SK-N-SH (cell line): ENCODE measurements at regions of chr11 and their contacts with region 1.

Region 1: DNA sequence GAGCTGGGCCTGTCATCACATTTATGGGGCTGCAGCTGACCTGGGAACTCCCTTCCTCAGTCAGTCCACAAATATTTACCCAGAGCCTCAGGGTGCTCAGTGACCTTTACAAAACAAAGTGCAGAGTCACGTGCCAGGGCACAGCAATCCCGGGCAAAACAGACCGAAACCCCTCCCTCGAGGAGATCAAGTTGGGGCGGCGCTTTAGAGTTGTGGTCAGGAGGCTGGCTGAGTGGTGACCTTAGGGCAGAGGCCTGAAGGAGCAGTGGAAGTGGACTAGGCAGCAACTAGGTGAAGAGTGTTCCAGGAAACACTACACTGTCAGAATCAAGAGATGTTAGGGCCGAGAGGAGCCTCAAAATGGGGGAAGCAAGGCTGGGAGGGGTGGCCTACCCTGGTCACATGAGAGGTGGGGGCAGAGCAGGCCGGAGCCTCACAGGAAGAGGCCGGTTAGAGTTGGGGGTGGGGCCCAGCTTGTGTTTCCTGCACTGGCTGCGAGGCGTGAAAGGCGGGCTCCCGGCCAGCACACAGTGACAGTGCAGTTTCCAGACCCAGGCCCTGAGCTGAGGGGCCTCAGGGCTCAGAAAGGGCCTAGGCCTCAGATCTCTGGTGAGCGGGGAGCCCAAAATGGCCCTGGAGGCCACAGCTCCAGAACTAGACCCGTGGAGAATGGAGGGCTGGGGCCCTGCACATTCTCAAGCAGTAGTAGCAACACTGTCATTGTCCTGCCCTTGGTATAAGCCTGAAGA is 3.7 kb upstream of the NEAT1 start:
- DNase-seq: peak; percentile 91
- H3K4me3 ChIP-seq: peak overlapping the region; percentile 13 to 18; a peak in 3 of 4 replicates
- H3K27ac ChIP-seq: peak overlapping the region; percentile 100
- H3K4me1 ChIP-seq: peaks cover 50 to 61% of the 10 kb centered on the region in 2 experiments
- H3K27me3 ChIP-seq: no peaks in the 10 kb centered on the region
- CTCF ChIP-seq: no peak
- EP300 ChIP-seq: peak; percentile 36 to 65; a peak in 3 of 4 replicates
- RAD21 ChIP-seq: no peak

Region 2: DNA sequence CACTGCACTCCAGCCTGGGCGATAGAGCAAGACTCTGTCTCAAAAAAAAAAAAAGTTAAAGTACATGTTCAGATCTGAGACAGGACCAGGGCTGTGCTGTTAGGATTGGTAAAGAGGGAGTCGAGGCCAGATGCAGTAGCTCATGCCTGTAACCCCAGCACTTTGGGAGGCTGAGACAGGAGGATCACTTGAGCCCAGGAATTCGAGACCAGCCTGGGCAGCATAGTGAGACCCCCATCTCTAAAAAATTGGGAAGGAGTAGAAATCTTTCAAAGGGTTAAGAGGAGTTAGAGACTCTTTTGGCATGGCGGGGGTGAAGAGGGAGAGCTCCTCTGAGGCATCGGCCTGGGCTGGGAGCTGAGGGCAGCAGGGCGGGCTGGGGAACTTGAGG is 48.2 kb before region 1 on chr11:
- CTCF ChIA-PET with region 1: interaction called, 22 read pairs
- POLR2A ChIA-PET with region 1: interaction called, 6 read pairs
- DNase-seq: no peak
- H3K4me3 ChIP-seq: no peak overlapping the region
- H3K27ac ChIP-seq: peak overlapping the region in 1 of 2 experiments; percentile 79; a peak in 2 of 4 replicates
- H3K4me1 ChIP-seq: no peaks in the 10 kb centered on the region; a peak in 2 of 4 replicates
- H3K27me3 ChIP-seq: no peaks in the 10 kb centered on the region
- CTCF ChIP-seq: no peak
- EP300 ChIP-seq: no peak
- RAD21 ChIP-seq: no peak

Region 3: DNA sequence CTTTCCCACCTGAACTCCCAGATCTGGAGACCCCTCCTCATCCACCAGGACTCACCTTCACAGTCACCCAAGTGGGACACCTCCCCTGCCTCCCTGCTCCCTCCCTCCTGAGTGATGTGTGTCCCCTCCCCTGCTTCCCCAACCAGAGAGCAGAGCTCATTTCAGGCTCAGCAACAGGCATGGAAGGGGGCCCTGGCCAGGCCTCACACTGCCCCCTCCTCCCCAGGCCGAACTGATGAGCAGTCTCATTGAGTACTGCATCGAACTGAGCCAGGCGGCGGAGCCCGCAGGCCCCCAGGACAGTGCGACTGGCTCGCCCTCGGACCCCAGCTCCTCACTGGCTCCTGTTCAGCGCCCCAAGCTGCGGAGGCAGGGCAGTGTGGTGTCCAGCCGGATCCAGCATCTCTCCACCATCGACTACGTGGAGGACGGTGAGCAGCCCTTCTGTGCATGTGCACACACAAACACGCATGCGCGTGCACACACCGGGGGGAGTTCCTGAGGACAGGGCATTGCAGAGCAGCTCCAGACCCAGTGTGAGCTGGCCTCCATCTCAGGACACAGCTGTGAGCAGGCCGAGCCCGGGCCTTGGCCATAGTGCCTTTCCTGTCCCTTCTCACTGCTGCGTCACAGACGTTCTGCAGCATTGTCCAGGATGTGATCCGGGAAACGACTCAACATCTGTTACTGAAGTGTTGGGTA is 14.1 kb before region 1 on chr11:
- CTCF ChIA-PET with region 1: interaction called, 40 read pairs
- POLR2A ChIA-PET with region 1: no interaction called
- DNase-seq: no peak
- H3K4me3 ChIP-seq: no peak overlapping the region
- H3K27ac ChIP-seq: no peak overlapping the region
- H3K4me1 ChIP-seq: no peaks in the 10 kb centered on the region
- H3K27me3 ChIP-seq: no peaks in the 10 kb centered on the region
- CTCF ChIP-seq: no peak
- EP300 ChIP-seq: no peak
- RAD21 ChIP-seq: no peak

Region 4: DNA sequence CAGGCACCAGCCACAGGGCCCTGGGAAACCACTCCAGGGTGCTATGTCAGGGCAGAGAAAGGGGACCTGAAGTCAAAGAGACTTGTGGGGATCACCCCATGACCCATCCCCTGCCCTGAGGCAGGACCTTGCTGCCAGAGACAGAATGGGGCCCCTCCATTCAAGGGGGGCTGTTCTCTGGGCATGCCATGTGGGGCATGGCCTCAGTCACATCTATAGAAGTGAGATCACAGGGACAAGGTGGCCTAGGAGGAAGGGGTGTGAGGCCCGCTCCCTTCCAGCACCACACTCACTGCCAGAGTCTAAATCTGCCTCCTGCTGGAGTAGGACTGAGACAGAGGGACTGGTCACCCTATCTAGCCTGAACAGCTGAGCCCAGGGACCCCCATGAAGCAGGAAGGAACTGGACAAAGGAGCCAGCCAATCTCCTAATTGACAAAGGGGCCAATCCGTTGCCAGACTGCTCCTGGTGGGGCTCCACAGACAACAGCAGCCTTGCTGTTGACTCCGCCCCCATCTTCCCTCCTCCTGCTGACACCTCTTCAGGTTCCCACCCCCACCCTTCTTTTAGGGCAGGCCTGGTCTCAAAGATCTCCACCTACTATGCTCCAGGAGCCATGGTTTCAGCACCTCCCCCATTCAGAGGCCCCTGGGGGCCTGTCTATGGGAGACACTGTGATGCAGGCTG is 29.7 kb after region 1 on chr11:
- CTCF ChIA-PET with region 1: interaction called, 4 read pairs
- POLR2A ChIA-PET with region 1: interaction called, 22 read pairs
- DNase-seq: no peak
- H3K4me3 ChIP-seq: no peak overlapping the region
- H3K27ac ChIP-seq: peak overlapping the region in 1 of 2 experiments; percentile 100; a peak in 2 of 4 replicates
- H3K4me1 ChIP-seq: peaks cover 0 to 15% of the 10 kb centered on the region in 2 experiments; a peak in 2 of 4 replicates
- H3K27me3 ChIP-seq: no peaks in the 10 kb centered on the region
- CTCF ChIP-seq: no peak
- EP300 ChIP-seq: no peak
- RAD21 ChIP-seq: no peak

Region 5: GRCh38 chr11:65477149-65477965 is 58.5 kb after region 1 on chr11:
- CTCF ChIA-PET with region 1: interaction called, 54 read pairs
- POLR2A ChIA-PET with region 1: interaction called, 118 read pairs
- DNase-seq: peak; percentile 98
- H3K4me3 ChIP-seq: peak overlapping the region; percentile 67 to 70
- H3K27ac ChIP-seq: peak overlapping the region; percentile 91 to 100
- H3K4me1 ChIP-seq: peaks cover 30 to 38% of the 10 kb centered on the region in 2 experiments
- H3K27me3 ChIP-seq: no peaks in the 10 kb centered on the region
- CTCF ChIP-seq: no peak
- EP300 ChIP-seq: peak; percentile 25 to 60; a peak in 2 of 4 replicates
- RAD21 ChIP-seq: no peak